ENCODE measurements at regions of chr9 and their contacts with region 1.

Region 1: DNA sequence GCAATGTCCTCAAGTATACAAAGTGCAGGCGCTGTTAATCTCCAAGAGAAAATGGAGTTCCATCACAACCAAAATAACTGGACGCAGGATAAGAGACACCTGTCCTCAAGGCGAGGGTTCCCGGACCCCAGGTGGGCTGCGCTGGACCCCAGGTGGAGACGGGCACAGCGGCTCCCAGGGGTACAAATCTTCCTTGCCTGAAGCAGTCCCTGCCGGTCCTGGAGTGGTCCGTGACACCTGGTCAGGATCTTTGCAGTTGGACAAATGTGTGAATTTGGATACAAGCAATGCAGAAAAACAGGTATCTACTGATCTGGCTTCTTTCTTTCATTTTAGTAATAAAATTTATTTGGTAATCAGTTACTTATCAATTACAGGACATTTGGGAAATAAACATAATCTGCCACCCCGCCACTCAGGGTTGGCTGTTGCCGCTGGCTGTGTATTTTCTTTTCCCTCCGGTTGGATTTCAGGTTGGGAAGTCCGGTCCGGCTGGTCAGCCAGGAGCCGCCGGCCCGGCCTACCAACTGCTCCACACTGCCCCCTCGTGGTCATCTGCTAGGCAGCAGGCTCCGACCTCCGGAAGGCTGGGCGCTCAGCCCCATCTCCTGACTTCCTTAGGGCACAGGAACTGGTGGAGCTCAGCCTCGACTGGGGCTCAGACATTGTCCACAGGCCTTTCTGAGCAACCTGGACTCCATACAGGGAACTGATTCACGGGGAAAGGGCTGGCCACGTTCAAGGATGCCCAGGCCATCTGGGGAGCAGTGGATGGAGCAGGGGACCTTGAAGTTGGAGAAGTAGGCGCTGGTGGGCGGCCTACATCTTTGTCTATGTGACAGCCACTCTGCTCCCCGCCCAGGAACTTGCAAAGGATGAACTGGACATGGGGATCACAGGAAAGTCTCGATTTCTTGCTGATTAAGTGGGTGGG is 43.4 kb downstream of the NXNL2 start:
- DNase-seq: peak; percentile 72
- H3K4me3 ChIP-seq: no peak overlapping the region
- H3K27ac ChIP-seq: no peak overlapping the region
- H3K4me1 ChIP-seq: no peaks in the 10 kb centered on the region
- H3K27me3 ChIP-seq: no peaks in the 10 kb centered on the region
- CTCF ChIP-seq: peak; percentile 92 to 99 (median 96)
- POLR2A ChIP-seq: peak; percentile 13

Region 2: GRCh38 chr9:87684627-87685219 is 893.7 kb before region 1 on chr9:
- intact Hi-C with region 1: loop called (anchors 10 kb)
- DNase-seq: peak; percentile 62
- H3K4me3 ChIP-seq: no peak overlapping the region
- H3K27ac ChIP-seq: no peak overlapping the region
- H3K4me1 ChIP-seq: no peaks in the 10 kb centered on the region
- H3K27me3 ChIP-seq: no peaks in the 10 kb centered on the region
- CTCF ChIP-seq: peak; percentile 59 to 90 (median 77)
- POLR2A ChIP-seq: no peak

Region 3: GRCh38 chr9:88106491-88106890 is 471.9 kb before region 1 on chr9:
- intact Hi-C with region 1: loop called (anchors 2 kb)
- DNase-seq: no peak
- H3K4me3 ChIP-seq: no peak overlapping the region
- H3K27ac ChIP-seq: no peak overlapping the region
- H3K4me1 ChIP-seq: no peaks in the 10 kb centered on the region
- H3K27me3 ChIP-seq: no peaks in the 10 kb centered on the region
- CTCF ChIP-seq: peak in 3 of 4 experiments; percentile 47 to 73 (median 70)
- POLR2A ChIP-seq: no peak

Region 4: DNA sequence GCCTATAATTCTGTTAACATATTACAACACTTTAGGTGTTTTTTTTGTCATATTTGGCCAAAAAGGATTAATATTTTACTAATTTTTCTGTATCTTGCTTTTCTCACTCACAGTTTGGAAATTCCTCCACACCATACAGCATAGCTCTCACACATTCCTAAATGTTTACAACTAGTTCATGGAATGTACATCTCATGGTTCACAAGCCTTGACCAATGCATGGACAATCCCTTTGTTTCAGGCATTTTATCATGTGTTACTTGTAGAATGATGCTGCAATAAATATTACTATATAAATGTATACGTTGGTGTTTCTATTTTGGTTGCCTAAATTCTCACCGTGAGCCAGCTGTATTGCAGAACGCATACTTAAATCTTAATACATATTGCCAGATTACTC is 359.7 kb before region 1 on chr9:
- intact Hi-C with region 1: no loop called
- DNase-seq: no peak
- H3K4me3 ChIP-seq: no peak overlapping the region
- H3K27ac ChIP-seq: no peak overlapping the region
- H3K4me1 ChIP-seq: no peaks in the 10 kb centered on the region
- H3K27me3 ChIP-seq: no peaks in the 10 kb centered on the region
- CTCF ChIP-seq: no peak
- POLR2A ChIP-seq: no peak

Region 5: GRCh38 chr9:88388172-88388885 is 190.1 kb before region 1 on chr9 and contains the start of gene SPIN1:
- intact Hi-C with region 1: loop called (anchors 10 kb)
- DNase-seq: peak; percentile 70
- H3K4me3 ChIP-seq: peak within 1 kb of the TSS; percentile 87 to 91
- H3K27ac ChIP-seq: peak within 1 kb of the TSS; percentile 87 to 95
- H3K4me1 ChIP-seq: no peaks in the 10 kb centered on the region
- H3K27me3 ChIP-seq: no peaks in the 10 kb centered on the region
- CTCF ChIP-seq: peak; percentile 41 to 72 (median 50)
- POLR2A ChIP-seq: peak; percentile 75
- total RNA-seq, gene SPIN1: 74.5 to 98.5 TPM

Region 6: GRCh38 chr9:88534456-88535261 is 43.7 kb before region 1 on chr9 and contains the start of gene NXNL2:
- intact Hi-C with region 1: loop called (anchors 5 kb)
- DNase-seq: peak; percentile 84
- H3K4me3 ChIP-seq: peak within 1 kb of the TSS; percentile 31 to 51
- H3K27ac ChIP-seq: peak within 1 kb of the TSS; percentile 73 to 77
- H3K4me1 ChIP-seq: no peaks in the 10 kb centered on the region
- H3K27me3 ChIP-seq: no peaks in the 10 kb centered on the region
- CTCF ChIP-seq: no peak
- POLR2A ChIP-seq: peak; percentile 50
- total RNA-seq, gene NXNL2: 0.68 to 1.9 TPM